WTC11 (cell line): ENCODE measurements at regions of chr2 and their contacts with region 1.

Region 1: DNA sequence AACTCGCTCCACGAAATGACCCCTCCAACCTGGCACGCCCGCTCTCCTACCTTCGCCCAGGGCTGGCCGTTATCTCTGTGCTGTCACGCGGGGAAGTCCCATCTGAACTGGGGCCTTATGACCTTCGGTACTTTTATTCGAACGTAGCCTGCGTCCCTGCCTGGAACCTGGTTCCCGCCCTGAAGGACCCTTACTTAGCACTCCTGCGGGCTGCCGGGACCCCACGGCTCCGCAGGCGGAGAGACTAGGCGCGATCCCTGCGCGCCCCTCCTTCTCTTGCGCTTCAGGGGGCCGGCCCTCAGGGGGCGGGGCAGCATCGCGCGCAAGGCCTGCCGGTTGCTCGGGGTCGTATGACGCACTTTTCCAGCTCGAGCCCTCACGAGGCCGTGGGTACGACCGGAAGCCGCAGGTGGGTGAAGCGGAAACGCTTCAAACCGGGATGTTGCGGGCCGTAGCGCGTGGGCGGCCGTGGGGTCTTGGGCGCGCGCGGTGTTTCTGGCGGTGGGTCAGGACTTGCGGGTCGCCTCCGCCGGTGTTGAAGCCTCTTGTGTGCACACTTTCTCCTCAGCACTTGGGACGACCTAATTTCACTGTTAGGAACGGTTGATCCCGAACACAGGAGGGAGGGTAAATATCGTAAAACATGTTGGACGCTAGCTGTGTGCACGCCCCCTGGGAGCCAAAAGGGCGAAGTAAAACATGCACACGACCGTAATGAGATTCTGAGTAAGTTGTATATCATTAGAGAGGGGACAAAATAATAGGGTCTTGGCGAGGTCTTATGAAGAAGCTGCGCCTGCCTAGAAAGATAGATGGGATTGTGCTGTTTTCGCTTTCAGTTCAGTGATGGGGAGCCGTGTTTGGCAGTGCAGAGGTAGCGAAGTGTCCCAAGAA is at the starts of genes LIPT1 and TSGA10:
- DNase-seq: peak; percentile 80
- ATAC-seq: peak; percentile 93
- H3K4me3 Mint-ChIP-seq: peak within 1 kb of the TSS; percentile 78
- H3K27ac Mint-ChIP-seq: peak within 1 kb of the TSS; percentile 94
- H3K4me1 Mint-ChIP-seq: peaks cover 21% of the 10 kb centered on the region
- H3K27me3 Mint-ChIP-seq: no peaks in the 10 kb centered on the region; the same call in 1 of the 2 replicates
- CTCF ChIP-seq: no peak
- total RNA-seq, gene LIPT1: 7.1 to 9.7 TPM (median 8.1 TPM) in 3 replicates
- total RNA-seq, gene TSGA10: 8.9 to 9.3 TPM (median 9.1 TPM) in 3 replicates

Region 2: DNA sequence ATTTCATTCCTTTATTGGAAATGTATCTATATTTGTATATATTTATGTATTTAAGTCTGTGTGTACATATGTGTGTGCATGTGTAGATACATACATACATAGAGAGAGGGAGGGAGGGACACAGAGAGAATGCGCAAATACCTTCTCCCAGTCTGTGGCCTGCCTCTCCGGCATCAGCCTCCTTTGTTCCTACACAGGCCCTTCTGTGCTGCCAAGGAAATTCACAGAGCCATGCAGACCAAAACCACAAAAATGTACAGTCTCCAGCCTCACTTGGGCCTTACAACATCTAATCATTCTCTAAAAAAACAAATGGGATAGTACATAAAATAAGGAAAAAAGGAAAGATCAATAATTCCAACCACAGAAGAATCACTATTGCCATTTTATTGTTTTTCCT is 210.1 kb before region 1 on chr2:
- CTCF ChIA-PET with region 1: no interaction called
- POLR2A ChIA-PET with region 1: no interaction called
- DNase-seq: no peak
- ATAC-seq: no peak
- H3K4me3 Mint-ChIP-seq: no peak overlapping the region
- H3K27ac Mint-ChIP-seq: no peak overlapping the region
- H3K4me1 Mint-ChIP-seq: no peaks in the 10 kb centered on the region
- H3K27me3 Mint-ChIP-seq: peaks cover under 1% of the 10 kb centered on the region
- CTCF ChIP-seq: no peak

Region 3: GRCh38 chr2:99067871-99068625 is 86.8 kb before region 1 on chr2:
- CTCF ChIA-PET with region 1: no interaction called
- POLR2A ChIA-PET with region 1: no interaction called
- DNase-seq: no peak
- ATAC-seq: no peak
- H3K4me3 Mint-ChIP-seq: no peak overlapping the region
- H3K27ac Mint-ChIP-seq: no peak overlapping the region
- H3K4me1 Mint-ChIP-seq: no peaks in the 10 kb centered on the region
- H3K27me3 Mint-ChIP-seq: no peaks in the 10 kb centered on the region
- CTCF ChIP-seq: no peak

Region 4: DNA sequence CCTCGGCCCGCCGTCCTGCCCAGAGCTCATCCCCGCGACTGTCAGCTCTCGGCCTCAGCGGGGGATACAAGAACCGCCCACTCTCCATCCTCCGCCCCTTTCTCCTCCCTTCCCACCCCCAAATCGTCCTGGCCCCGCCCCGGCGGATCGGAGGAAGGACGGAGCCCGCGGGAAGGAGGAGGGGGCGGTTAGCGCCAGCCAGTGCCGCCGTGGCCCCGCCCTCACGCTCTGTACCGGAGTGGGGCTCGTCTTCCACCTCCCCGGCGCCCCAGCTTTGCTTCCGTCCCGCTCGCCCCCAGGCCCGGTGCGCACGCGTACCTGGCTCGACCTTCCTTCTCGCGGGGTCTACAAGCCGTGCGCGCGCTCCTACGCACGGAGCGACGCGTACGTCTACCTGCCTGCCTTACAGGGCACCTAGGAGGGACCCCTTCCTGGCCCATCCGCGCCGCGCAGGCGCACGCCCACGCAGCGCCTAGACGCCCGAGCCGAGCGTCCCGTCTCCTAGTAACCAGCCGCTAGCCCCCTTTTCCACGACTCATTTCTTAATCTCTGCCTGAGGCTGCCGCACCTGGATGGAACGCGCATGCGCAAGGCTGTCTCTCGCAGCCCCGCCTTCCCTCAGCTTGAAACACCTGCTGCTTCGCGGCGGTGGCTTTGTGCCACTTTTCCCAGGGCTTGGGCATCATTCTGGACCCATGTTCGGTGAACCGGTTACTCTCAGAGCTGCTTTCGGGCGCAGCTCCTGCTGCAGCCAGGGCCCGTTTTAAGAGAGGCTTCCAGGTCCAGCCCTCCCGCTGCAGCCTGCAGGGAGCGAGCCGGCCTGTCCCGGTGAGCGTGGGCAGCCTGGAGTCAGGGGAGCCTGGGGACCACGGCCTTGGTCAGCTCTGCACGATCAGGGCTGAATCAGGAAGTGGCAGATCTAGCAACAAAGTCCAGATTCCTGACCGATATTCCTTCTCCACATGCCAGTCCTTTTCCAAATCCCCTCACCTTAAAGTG is 13.5 kb before region 1 on chr2 and contains the start of gene C2orf15:
- CTCF ChIA-PET with region 1: interaction called, 9 read pairs
- POLR2A ChIA-PET with region 1: interaction called, 18 read pairs
- DNase-seq: peak; percentile 97
- ATAC-seq: peak; percentile 91
- H3K4me3 Mint-ChIP-seq: peak within 1 kb of the TSS; percentile 93
- H3K27ac Mint-ChIP-seq: peak within 1 kb of the TSS; percentile 99
- H3K4me1 Mint-ChIP-seq: peaks cover 16% of the 10 kb centered on the region
- H3K27me3 Mint-ChIP-seq: peaks cover 11% of the 10 kb centered on the region
- CTCF ChIP-seq: no peak
- total RNA-seq, gene C2orf15: 6.0 to 7.0 TPM (median 6.1 TPM) in 3 replicates

Region 5: GRCh38 chr2:99430614-99431291 is 275.9 kb after region 1 on chr2:
- CTCF ChIA-PET with region 1: no interaction called
- POLR2A ChIA-PET with region 1: no interaction called
- DNase-seq: no peak
- ATAC-seq: no peak
- H3K4me3 Mint-ChIP-seq: no peak overlapping the region
- H3K27ac Mint-ChIP-seq: 0 out of 2 replicates have a peak overlapping the region, but pooled peaks have one; percentile 2
- H3K4me1 Mint-ChIP-seq: peaks cover 4% of the 10 kb centered on the region
- H3K27me3 Mint-ChIP-seq: no peaks in the 10 kb centered on the region
- CTCF ChIP-seq: no peak